MCF 10A (cell line): ENCODE measurements at regions of chr19 and their contacts with region 1.

Region 1: GRCh38 chr19:18856385-18857126 is 24.8 kb downstream of the UPF1 start:
- DNase-seq: peak; percentile 58
- H3K4me3 Mint-ChIP-seq: no peak overlapping the region
- H3K27ac Mint-ChIP-seq: no peak overlapping the region
- H3K4me1 Mint-ChIP-seq: no peaks in the 10 kb centered on the region
- H3K27me3 Mint-ChIP-seq: no peaks in the 10 kb centered on the region
- CTCF ChIP-seq: peak; percentile 27

Region 2: GRCh38 chr19:18542936-18543815 is 313.4 kb before region 1 on chr19 and contains the start of gene FKBP8:
- CTCF ChIA-PET with region 1: no interaction called
- POLR2A ChIA-PET with region 1: no interaction called
- intact Hi-C with region 1: no loop called
- DNase-seq: peak; percentile 87
- H3K4me3 Mint-ChIP-seq: peak within 1 kb of the TSS; percentile 87
- H3K27ac Mint-ChIP-seq: peak within 1 kb of the TSS; percentile 94
- H3K4me1 Mint-ChIP-seq: peaks cover 8% of the 10 kb centered on the region
- H3K27me3 Mint-ChIP-seq: no peaks in the 10 kb centered on the region
- CTCF ChIP-seq: no peak
- total RNA-seq, gene FKBP8: 142 and 154 TPM in 2 replicates

Region 3: DNA sequence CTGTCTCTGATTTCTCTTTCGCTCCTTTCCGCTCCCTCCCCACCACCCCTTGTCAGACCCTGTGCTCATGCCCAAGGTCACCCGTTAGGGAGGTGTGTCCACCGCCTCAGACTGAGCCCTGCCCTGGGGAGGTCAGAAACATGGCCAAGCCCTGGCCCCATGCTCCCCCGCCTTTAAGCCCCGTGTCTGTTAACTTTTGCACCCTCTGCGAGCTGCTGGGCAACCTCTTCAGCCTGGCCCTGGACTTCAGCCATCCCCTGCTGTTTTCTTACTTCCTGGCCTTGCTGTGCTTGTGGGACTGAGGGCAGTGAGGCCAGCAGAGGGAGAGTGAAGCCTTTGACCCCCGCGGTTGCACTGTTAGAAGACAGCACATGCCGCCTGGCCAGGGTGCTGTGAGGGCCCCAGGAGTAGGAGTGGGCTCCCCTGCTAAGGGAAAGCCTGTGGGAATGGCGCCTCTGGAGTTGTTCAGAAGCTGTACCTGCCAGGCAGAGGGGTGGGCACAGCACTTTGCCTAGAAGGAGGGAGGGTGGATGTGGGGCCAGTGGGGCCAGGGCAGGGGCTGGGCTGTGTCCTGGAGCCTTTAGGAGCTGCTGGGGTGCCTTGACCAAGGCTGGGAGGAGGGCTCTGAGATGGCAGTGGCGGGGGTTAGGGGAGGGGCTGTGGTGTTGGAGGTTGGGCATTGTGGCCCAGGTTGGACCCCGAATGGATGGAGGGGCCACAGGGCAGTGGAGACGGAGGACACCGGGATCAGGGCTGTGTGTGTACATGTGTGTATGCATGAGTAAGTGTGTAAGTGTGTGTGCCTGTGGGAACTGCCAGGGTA is 16.9 kb before region 1 on chr19:
- CTCF ChIA-PET with region 1: interaction called, 17 read pairs
- POLR2A ChIA-PET with region 1: interaction called, 7 read pairs
- intact Hi-C with region 1: no loop called
- DNase-seq: no peak
- H3K4me3 Mint-ChIP-seq: no peak overlapping the region
- H3K27ac Mint-ChIP-seq: no peak overlapping the region
- H3K4me1 Mint-ChIP-seq: peaks cover 37% of the 10 kb centered on the region
- H3K27me3 Mint-ChIP-seq: no peaks in the 10 kb centered on the region
- CTCF ChIP-seq: no peak